ENCODE measurements at regions of chr1 and their contacts with region 1.

Region 1: DNA sequence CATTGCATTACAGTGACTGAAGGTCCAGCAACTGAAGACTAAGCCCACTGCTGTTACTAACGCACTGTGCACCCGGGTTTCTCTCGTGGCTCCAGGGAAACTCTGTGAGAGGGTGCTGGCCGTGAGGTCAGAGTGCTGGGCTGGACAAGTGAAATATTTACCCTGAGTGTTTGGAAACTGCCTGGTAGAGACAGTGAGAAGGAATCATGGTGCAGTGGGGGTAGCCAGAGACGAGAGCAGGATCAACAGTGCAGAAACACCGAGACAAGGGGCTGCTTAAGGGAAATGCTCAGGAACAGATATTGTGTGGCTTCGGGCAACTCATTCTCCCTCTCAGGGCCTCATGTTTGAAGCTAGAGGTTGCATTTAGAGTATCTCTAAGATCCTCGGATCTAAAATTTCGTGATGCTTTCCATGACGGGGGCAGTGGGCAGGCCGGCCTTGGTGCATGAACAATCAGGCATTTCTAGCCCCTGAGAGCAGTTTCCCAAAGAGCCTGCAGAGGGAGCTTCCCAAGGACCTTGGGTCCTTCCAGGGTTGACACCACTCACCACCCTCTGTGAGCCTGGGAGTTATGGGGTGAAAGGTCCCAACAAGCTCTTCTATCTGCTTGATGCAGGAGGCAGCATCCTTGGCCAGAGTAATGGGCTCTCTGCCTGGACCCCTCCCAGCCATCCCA is 9.7 kb downstream of the CD2 start:
- DNase-seq: peak in 2 of 3 donors; percentile 44 to 68
- ATAC-seq: peak; percentile 54
- H3K4me3 ChIP-seq: no peak overlapping the region
- H3K4me1 ChIP-seq: no peaks in the 10 kb centered on the region
- CTCF ChIP-seq: peak; percentile 33

Region 2: DNA sequence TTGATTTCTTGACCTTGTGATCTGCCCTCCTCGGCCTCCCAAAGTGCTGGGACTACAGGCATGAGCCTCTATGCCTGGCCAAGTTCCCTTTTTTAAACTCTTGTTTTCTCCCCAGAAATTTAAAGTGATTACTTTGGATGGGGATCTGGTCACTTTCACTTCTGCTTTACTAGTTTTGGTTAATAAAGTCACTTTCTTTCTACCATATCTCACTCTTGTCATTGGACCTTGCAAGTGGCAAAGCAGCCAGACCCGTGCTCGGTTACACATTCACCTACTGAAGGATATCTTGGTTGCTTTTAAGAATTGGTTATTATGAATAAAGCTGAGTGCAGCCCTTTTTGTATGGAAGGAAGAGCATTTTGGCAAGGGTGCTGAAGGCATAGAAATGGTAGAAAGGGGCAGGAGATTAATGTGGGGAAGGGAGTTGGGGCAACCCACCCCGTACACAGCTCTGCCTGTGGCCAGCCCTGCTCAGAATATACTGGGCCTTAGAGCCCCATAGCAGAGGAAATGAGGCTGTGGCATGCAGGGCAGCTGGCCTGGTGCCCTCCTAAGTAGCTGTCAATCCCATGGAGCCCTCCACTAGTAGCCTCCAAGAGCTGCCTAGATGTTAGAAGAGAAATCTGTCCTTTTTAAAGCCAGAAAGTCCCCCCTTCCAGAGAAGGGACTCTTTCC is 31.0 kb after region 1 on chr1:
- intact Hi-C with region 1: loop called in 1 of 2 experiments (anchors 2 kb)
- DNase-seq: no peak
- ATAC-seq: no peak
- H3K4me3 ChIP-seq: no peak overlapping the region
- H3K4me1 ChIP-seq: no peaks in the 10 kb centered on the region
- CTCF ChIP-seq: no peak

Region 3: DNA sequence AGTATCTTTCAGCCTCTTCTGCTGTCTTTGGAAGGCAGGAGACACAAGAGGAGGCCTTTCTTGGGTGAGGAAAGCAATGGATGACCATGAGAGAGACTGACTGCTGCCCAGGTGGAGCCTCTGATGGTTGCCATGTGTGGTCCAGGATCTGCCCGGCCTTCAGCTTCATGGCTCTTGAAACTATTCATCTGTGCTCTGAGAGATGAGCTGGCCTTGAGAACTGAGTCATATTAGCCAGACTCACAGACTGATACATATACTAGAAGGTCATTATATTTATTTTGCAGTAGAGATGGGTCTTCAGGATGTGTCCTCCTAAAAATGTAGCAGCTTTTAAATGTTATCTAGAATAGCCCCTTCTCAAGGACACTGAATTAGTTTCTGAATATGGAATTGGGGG is 179.5 kb after region 1 on chr1:
- intact Hi-C with region 1: no loop called
- DNase-seq: no peak
- ATAC-seq: no peak
- H3K4me3 ChIP-seq: no peak overlapping the region
- H3K4me1 ChIP-seq: no peaks in the 10 kb centered on the region
- CTCF ChIP-seq: no peak

Measured in mucosa of descending colon (tissue), 3 donors.